ENCODE measurements at regions of chr20 and their contacts with region 1.

Region 1: GRCh38 chr20:35023624-35024023 is 68.0 kb downstream of the MYH7B start:
- DNase-seq: no peak
- ATAC-seq: no peak
- H3K4me3 ChIP-seq: no peak overlapping the region
- H3K27ac ChIP-seq: no peak overlapping the region
- H3K4me1 ChIP-seq: 0 out of 2 replicates have a peak, but pooled peaks cover 2% of the 10 kb centered on the region
- H3K27me3 ChIP-seq: no peaks in the 10 kb centered on the region
- CTCF ChIP-seq: no peak
- POLR2A ChIP-seq: no peak
- RAD21 ChIP-seq: no peak

Region 2: GRCh38 chr20:34915749-34916455 is 107.7 kb before region 1 on chr20:
- CTCF ChIA-PET with region 1: no interaction called
- POLR2A ChIA-PET with region 1: no interaction called
- dilution Hi-C with region 1: no loop called
- in situ Hi-C with region 1: no loop called
- intact Hi-C with region 1: no loop called
- DNase-seq: no peak
- ATAC-seq: no peak
- H3K4me3 ChIP-seq: no peak overlapping the region
- H3K27ac ChIP-seq: no peak overlapping the region
- H3K4me1 ChIP-seq: no peaks in the 10 kb centered on the region
- H3K27me3 ChIP-seq: no peaks in the 10 kb centered on the region
- CTCF ChIP-seq: no peak
- POLR2A ChIP-seq: no peak
- RAD21 ChIP-seq: no peak

Region 3: GRCh38 chr20:34955232-34956040 is 68.2 kb before region 1 on chr20 and contains the starts of genes GSS and MYH7B:
- CTCF ChIA-PET with region 1: no interaction called
- POLR2A ChIA-PET with region 1: no interaction called
- dilution Hi-C with region 1: no loop called
- in situ Hi-C with region 1: no loop called
- intact Hi-C with region 1: loop called (anchors 2 kb)
- DNase-seq: peak; percentile 93
- ATAC-seq: peak; percentile 96
- H3K4me3 ChIP-seq: peak within 1 kb of the TSS; percentile 62
- H3K27ac ChIP-seq: peak within 1 kb of the TSS; percentile 88
- H3K4me1 ChIP-seq: peaks cover 4% of the 10 kb centered on the region
- H3K27me3 ChIP-seq: no peaks in the 10 kb centered on the region
- CTCF ChIP-seq: peak; percentile 56
- POLR2A ChIP-seq: peak; percentile 91
- RAD21 ChIP-seq: peak; percentile 70
- total RNA-seq, gene GSS: 70.5 and 90.0 TPM in 2 replicates
- total RNA-seq, gene MYH7B: not detected in 2 replicates